WTC11 (cell line): ENCODE measurements at regions of chr2 and their contacts with region 1.

Region 1: DNA sequence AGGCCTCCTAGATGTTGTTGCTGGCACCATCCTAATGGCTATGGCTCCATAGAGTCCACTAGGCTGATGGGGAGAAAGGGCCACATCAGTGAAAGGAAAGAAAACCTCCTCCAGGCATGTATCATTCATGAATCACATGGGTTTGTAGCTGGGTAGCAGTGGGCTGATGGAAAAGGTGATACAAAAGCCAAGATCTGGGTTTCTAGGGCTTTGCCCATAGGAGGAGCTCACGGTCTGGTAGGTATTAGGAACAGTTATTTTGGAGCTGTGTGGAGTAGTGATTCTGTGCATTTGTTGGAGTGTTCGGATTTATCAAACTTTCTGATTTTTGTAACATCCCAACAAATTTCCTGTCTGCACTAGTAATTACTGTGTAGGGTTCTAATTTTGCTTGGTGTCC is 259.2 kb downstream of the SLC4A3 start:
- DNase-seq: no peak
- ATAC-seq: peak; percentile 91
- H3K4me3 Mint-ChIP-seq: no peak overlapping the region
- H3K27ac Mint-ChIP-seq: no peak overlapping the region
- H3K4me1 Mint-ChIP-seq: no peaks in the 10 kb centered on the region
- H3K27me3 Mint-ChIP-seq: no peaks in the 10 kb centered on the region; the same call in 1 of the 2 replicates
- CTCF ChIP-seq: no peak

Region 2: DNA sequence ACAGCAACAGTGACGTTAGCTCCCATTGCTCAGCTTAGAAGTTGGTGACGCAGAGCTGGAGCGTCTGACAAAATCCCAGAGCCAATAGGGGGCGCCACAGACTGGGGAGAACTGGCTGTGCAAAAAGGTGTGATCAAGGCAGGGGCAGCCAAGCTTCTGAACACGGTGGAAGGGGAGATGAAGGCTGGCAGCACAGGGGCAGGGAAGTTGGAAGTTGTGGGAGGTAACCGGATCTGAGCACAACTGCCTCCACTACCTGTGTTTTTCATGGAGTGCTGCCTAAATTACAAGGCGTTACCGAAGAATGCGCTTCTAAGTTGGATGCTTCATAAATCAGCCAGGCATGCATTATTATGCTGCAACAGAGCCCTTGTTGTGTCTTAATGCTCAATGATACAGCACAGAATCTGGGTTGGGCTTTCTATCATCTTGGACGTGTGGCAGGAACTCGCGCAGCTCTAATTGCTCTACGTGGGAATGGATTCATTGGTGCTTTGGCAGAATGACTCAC is 110.8 kb after region 1 on chr2:
- CTCF ChIA-PET with region 1: interaction called, 13 read pairs
- POLR2A ChIA-PET with region 1: no interaction called
- DNase-seq: peak; percentile 85
- ATAC-seq: peak; percentile 86
- H3K4me3 Mint-ChIP-seq: no peak overlapping the region
- H3K27ac Mint-ChIP-seq: no peak overlapping the region
- H3K4me1 Mint-ChIP-seq: peaks cover 15% of the 10 kb centered on the region
- H3K27me3 Mint-ChIP-seq: no peaks in the 10 kb centered on the region; the same call in 1 of the 2 replicates
- CTCF ChIP-seq: peak; percentile 56; the same call in 1 of the 2 replicates